PC-3 (cell line): ENCODE measurements at regions of chr7 and their contacts with region 1.

Region 1: DNA sequence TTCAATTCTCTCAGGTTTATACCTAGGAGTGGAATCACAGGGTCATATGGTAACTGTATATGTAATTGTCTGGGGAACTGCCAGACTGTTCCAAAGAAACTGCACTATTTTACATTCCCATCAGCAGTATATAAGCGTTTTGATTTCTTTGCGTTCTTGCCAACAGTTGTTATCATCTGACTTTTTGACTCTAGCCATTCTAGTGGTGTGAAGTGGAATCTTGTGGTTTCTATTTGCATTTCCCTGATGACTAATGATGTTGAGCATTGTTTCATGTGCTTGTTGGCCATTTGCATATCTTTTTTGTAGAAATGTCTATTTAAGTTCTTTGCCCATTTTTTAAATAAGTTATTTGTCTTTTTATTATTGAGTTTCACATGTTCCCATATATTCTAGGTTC is 44.3 kb upstream of the ZC3HAV1 start:
- DNase-seq: no peak
- ATAC-seq: no peak; the same call in 1 of the 2 replicates
- H3K4me3 ChIP-seq: no peak overlapping the region
- H3K27ac ChIP-seq: no peak overlapping the region
- H3K4me1 ChIP-seq: no peaks in the 10 kb centered on the region
- H3K27me3 ChIP-seq: no peaks in the 10 kb centered on the region
- CTCF ChIP-seq: no peak

Region 2: DNA sequence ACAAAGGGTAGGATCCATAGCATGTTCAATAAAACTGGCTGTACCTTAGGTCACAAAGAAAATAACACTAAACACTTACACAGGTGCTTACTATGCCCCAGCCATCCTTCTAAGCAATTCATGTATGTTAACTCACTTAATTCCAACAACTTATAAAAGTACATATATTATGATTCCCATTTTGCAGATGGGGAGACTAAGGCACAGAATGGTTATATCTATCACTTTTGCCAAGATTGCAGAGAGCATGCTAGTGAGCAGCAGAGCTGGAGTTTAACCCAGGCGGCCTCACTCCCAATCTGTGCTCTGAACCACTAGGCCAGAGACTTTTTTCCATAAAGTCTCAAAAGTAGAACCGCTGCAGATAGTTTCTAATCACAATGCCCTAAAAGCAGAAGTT is 58.3 kb after region 1 on chr7:
- CTCF ChIA-PET with region 1: no interaction called
- POLR2A ChIA-PET with region 1: no interaction called
- intact Hi-C with region 1: no loop called
- DNase-seq: no peak
- ATAC-seq: no peak
- H3K4me3 ChIP-seq: no peak overlapping the region
- H3K27ac ChIP-seq: no peak overlapping the region
- H3K4me1 ChIP-seq: no peaks in the 10 kb centered on the region
- H3K27me3 ChIP-seq: no peaks in the 10 kb centered on the region
- CTCF ChIP-seq: no peak

Region 3: GRCh38 chr7:140990193-140990962 is 1836.5 kb after region 1 on chr7:
- CTCF ChIA-PET with region 1: no interaction called
- POLR2A ChIA-PET with region 1: no interaction called
- intact Hi-C with region 1: loop called (anchors 10 kb)
- DNase-seq: peak; percentile 21
- ATAC-seq: peak; percentile 64
- H3K4me3 ChIP-seq: no peak overlapping the region
- H3K27ac ChIP-seq: no peak overlapping the region
- H3K4me1 ChIP-seq: 0 out of 2 replicates have a peak, but pooled peaks cover 7% of the 10 kb centered on the region
- H3K27me3 ChIP-seq: no peaks in the 10 kb centered on the region
- CTCF ChIP-seq: no peak